MCF 10A (cell line): ENCODE measurements at regions of chr6 and their contacts with region 1.

Region 1: DNA sequence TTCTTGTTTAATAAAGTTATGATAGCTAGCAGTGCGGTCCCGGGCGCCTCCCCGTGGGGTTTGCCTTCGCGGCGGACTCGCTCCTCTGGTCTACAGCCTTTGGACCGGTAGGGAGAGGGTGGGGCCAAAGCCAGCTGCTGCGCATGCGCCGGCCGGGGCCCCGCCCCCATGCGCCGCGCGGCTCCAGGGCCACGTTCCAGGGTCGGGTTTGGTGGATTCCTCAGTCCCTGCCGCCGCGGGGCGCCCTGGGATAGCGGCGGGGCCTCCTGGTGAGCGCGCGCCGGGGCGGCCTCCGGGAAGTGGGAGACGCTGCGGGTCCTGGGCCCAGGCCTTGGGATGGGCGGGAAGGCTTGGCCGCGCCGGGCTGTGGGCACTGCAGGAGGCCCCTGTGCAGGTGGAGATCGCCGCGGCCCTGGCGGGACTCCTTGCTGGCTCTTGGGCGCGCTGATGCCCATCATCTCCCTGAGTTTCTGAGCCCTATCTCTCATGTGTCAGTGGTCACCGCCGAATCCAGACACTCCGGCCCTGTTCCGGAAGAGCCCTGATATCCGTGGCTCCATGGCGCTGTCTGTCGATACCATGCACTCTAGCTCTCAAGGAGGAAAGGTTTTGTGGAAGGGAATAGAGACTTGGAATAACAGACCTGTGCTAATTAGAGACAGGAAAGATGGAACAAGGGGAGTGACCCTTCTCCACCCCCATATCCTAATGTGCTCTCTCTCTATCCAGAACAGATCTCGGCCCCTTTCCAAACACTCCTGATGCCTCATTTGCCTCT is at the start of gene VARS2:
- DNase-seq: peak; percentile 93
- H3K4me3 Mint-ChIP-seq: peak within 1 kb of the TSS; percentile 77
- H3K27ac Mint-ChIP-seq: peak within 1 kb of the TSS; percentile 92
- H3K4me1 Mint-ChIP-seq: peaks cover 19% of the 10 kb centered on the region
- H3K27me3 Mint-ChIP-seq: no peaks in the 10 kb centered on the region
- CTCF ChIP-seq: no peak
- total RNA-seq, gene VARS2: 38.8 and 52.7 TPM in 2 replicates

Region 2: GRCh38 chr6:30828027-30828960 is 86.0 kb before region 1 on chr6:
- CTCF ChIA-PET with region 1: interaction called, 25 read pairs
- POLR2A ChIA-PET with region 1: interaction called, 27 read pairs
- intact Hi-C with region 1: loop called (anchors 1 kb)
- DNase-seq: peak; percentile 93
- H3K4me3 Mint-ChIP-seq: no peak overlapping the region
- H3K27ac Mint-ChIP-seq: no peak overlapping the region
- H3K4me1 Mint-ChIP-seq: peaks cover 25% of the 10 kb centered on the region
- H3K27me3 Mint-ChIP-seq: no peaks in the 10 kb centered on the region
- CTCF ChIP-seq: peak; percentile 92

Region 3: GRCh38 chr6:30926644-30927043 is 12.4 kb after region 1 on chr6:
- CTCF ChIA-PET with region 1: interaction called, 71 read pairs
- POLR2A ChIA-PET with region 1: interaction called, 36 read pairs
- intact Hi-C with region 1: no loop called
- DNase-seq: peak; percentile 36
- H3K4me3 Mint-ChIP-seq: peak overlapping the region; percentile 42
- H3K27ac Mint-ChIP-seq: peak overlapping the region; percentile 95
- H3K4me1 Mint-ChIP-seq: peaks cover 45% of the 10 kb centered on the region
- H3K27me3 Mint-ChIP-seq: no peaks in the 10 kb centered on the region
- CTCF ChIP-seq: no peak

Region 4: GRCh38 chr6:31042806-31043205 is 128.5 kb after region 1 on chr6:
- CTCF ChIA-PET with region 1: interaction called, 19 read pairs
- POLR2A ChIA-PET with region 1: interaction called, 5 read pairs
- intact Hi-C with region 1: loop called (anchors 1 kb)
- DNase-seq: peak; percentile 66
- H3K4me3 Mint-ChIP-seq: no peak overlapping the region
- H3K27ac Mint-ChIP-seq: no peak overlapping the region
- H3K4me1 Mint-ChIP-seq: peaks cover 2% of the 10 kb centered on the region
- H3K27me3 Mint-ChIP-seq: no peaks in the 10 kb centered on the region
- CTCF ChIP-seq: peak; percentile 26

Region 5: DNA sequence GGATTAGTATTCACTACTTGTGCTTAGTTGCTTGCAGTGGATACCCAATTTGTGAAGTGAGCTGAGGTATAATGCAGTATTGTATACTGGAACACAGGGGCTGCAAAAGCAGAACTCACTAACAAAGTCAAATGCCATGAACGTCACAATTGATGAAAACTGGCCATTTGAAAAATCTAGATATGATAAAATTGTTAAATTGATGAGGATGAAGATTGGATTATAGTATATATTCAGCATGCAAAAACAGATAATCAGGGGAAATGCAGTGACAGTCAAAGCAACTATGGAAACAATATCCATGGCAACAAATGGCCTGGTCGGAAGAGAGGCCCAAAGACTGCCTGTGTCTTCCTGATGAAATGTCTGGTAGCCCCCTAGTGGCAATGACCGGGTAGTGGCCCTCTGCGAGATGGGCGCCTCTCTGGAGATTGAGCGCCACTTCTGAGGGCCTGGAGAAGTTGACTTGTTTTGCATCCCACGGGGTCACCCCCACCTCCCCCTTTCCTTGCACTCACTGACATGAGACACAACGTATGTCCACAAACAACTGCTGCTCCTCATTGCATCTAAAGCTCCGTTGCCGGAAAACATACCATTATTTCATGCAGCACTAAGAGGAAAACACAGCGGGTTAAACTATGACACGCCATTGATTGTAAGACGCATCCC is 154.5 kb after region 1 on chr6:
- CTCF ChIA-PET with region 1: interaction called, 749 read pairs
- POLR2A ChIA-PET with region 1: interaction called, 81 read pairs
- intact Hi-C with region 1: loop called (anchors 1 kb)
- DNase-seq: peak; percentile 82
- H3K4me3 Mint-ChIP-seq: no peak overlapping the region
- H3K27ac Mint-ChIP-seq: no peak overlapping the region
- H3K4me1 Mint-ChIP-seq: peaks cover 5% of the 10 kb centered on the region
- H3K27me3 Mint-ChIP-seq: no peaks in the 10 kb centered on the region
- CTCF ChIP-seq: peak; percentile 81

Region 6: DNA sequence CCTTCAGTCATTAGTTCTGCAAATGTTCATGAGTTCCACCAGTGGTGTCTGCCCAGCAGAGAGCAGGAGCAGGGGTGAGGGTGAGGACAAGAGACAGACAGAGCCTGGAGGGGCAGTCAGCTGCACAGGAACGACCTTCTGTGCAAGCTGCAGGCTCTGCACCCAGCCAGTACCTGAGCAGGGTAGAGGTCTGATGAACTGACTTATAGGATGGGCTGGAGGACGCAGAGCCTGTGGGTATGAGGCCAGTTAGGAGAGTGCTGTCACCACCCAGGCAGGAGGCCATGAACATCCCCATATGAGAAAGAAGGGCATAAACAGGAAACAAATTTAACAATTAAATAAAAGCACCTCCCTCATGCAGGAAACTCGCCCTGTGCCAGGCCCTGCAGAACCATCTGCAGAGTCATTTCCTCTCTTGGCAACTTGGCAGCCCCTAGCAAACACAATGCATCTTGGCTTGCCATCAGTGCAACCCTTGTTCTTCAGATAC is 180.2 kb after region 1 on chr6:
- CTCF ChIA-PET with region 1: interaction called, 29 read pairs
- POLR2A ChIA-PET with region 1: no interaction called
- intact Hi-C with region 1: no loop called
- DNase-seq: peak; percentile 64
- H3K4me3 Mint-ChIP-seq: no peak overlapping the region
- H3K27ac Mint-ChIP-seq: no peak overlapping the region
- H3K4me1 Mint-ChIP-seq: peaks cover 14% of the 10 kb centered on the region
- H3K27me3 Mint-ChIP-seq: no peaks in the 10 kb centered on the region
- CTCF ChIP-seq: no peak